HEK293 (cell line): ENCODE measurements at regions of chr19 and their contacts with region 1.

Region 1: GRCh38 chr19:49929611-49930482 is 543 bp upstream of the NUP62 start:
- H3K4me3 ChIP-seq: peak overlapping the region; percentile 85
- H3K27ac ChIP-seq: peak overlapping the region; percentile 99
- H3K4me1 ChIP-seq: peaks cover 9% of the 10 kb centered on the region
- CTCF ChIP-seq: no peak

Region 2: DNA sequence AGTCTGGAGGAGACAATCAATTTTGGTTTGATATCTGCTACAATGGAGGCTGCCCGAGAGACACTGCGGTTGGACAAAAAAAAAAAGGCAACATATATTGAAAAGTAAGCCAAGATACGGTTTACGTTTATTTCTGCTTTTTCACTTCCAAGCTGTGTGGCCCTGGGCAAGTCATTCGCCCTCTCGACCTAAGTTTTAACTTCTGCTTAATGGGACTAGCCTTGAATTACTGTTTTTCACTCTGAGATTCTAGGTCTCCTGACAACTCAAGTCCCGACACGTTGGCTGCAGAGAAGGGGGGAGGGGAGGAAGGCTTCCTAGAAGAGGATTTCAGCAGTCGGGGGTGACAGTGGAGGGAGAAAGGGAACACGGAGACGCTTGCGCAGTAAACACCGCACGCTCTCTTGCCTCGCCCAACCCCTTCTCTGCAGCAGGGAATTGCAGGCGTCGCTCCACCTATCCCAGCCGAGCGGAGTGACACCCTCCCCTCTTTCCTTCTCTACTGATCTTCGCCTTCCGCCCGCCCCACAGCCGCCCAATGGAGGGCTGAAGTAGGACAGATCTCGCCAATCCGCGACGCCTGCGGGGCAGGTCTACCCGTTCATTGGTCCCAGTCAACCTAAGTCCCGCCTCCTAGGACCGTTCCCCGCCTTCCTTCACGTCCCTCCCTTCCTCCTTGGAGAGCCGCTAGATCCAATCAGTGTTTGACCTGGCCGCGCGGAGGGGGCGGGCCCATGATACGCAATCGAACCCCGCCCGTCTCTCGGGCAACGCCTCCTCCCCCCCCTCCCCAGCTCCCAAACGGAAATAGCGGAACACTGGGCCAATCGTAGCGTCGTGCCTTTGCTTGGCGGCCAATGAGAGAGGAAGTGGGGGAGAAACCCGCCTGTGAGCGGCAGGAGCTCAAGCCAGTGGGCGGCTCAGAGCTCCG is 163.6 kb before region 1 on chr19:
- CTCF ChIA-PET with region 1: no interaction called
- POLR2A ChIA-PET with region 1: interaction called, 10 read pairs
- H3K4me3 ChIP-seq: peak overlapping the region; percentile 98
- H3K27ac ChIP-seq: peak overlapping the region; percentile 88
- H3K4me1 ChIP-seq: peaks cover 20% of the 10 kb centered on the region
- CTCF ChIP-seq: no peak

Region 3: DNA sequence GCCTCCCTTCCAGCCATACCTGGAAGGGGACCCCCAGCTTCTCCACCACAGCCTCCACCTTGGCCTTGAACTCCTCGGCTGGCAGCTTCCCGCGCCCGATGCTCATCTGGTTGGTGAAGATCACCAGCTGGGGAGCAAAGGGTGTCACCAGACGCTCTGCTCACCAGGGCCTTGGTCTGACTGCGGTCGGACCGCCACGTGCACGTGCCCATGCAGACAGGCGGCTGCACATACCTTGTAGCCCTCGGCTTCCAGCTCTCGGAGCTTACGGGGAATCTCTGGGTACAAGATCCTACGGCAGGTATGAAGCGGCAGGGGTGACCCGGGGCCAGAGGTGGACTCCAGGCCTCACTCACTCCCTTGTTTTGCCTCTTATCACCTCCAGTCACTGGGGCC is 65.9 kb before region 1 on chr19:
- CTCF ChIA-PET with region 1: interaction called, 4 read pairs
- POLR2A ChIA-PET with region 1: interaction called, 28 read pairs
- H3K4me3 ChIP-seq: no peak overlapping the region
- H3K27ac ChIP-seq: no peak overlapping the region
- H3K4me1 ChIP-seq: peaks cover 30% of the 10 kb centered on the region
- CTCF ChIP-seq: no peak

Region 4: GRCh38 chr19:49877020-49877878 is 52.6 kb before region 1 on chr19 and contains the starts of genes AKT1S1 and TBC1D17:
- CTCF ChIA-PET with region 1: interaction called, 3 read pairs
- POLR2A ChIA-PET with region 1: interaction called, 41 read pairs
- H3K4me3 ChIP-seq: peak within 1 kb of the TSS; percentile 79
- H3K27ac ChIP-seq: peak within 1 kb of the TSS; percentile 94
- H3K4me1 ChIP-seq: peaks cover 9% of the 10 kb centered on the region
- CTCF ChIP-seq: no peak

Region 5: GRCh38 chr19:49911381-49912145 is 18.3 kb before region 1 on chr19:
- CTCF ChIA-PET with region 1: interaction called, 4 read pairs
- POLR2A ChIA-PET with region 1: interaction called, 16 read pairs
- H3K4me3 ChIP-seq: no peak overlapping the region
- H3K27ac ChIP-seq: peak overlapping the region; percentile 34; the same call in 1 of the 2 replicates
- H3K4me1 ChIP-seq: no peaks in the 10 kb centered on the region
- CTCF ChIP-seq: no peak

Region 6: GRCh38 chr19:49954079-49954829 is 24.4 kb after region 1 on chr19:
- CTCF ChIA-PET with region 1: no interaction called
- POLR2A ChIA-PET with region 1: no interaction called
- H3K4me3 ChIP-seq: no peak overlapping the region
- H3K27ac ChIP-seq: no peak overlapping the region
- H3K4me1 ChIP-seq: 0 out of 2 replicates have a peak, but pooled peaks cover 4% of the 10 kb centered on the region
- CTCF ChIP-seq: no peak

Region 7: GRCh38 chr19:50025024-50025789 is 95.4 kb after region 1 on chr19 and contains the start of gene VRK3:
- CTCF ChIA-PET with region 1: interaction called, 6 read pairs
- POLR2A ChIA-PET with region 1: interaction called, 15 read pairs
- H3K4me3 ChIP-seq: peak within 1 kb of the TSS; percentile 90
- H3K27ac ChIP-seq: peak within 1 kb of the TSS; percentile 47; the same call in 1 of the 2 replicates
- H3K4me1 ChIP-seq: peaks cover 6% of the 10 kb centered on the region
- CTCF ChIP-seq: peak; percentile 61